GM10248 (cell line): ENCODE measurements at regions of chr14 and their contacts with region 1.

Region 1: GRCh38 chr14:20343092-20343861 is at the start of gene PARP2:
- DNase-seq: peak; percentile 93
- CTCF ChIP-seq: no peak

Region 2: DNA sequence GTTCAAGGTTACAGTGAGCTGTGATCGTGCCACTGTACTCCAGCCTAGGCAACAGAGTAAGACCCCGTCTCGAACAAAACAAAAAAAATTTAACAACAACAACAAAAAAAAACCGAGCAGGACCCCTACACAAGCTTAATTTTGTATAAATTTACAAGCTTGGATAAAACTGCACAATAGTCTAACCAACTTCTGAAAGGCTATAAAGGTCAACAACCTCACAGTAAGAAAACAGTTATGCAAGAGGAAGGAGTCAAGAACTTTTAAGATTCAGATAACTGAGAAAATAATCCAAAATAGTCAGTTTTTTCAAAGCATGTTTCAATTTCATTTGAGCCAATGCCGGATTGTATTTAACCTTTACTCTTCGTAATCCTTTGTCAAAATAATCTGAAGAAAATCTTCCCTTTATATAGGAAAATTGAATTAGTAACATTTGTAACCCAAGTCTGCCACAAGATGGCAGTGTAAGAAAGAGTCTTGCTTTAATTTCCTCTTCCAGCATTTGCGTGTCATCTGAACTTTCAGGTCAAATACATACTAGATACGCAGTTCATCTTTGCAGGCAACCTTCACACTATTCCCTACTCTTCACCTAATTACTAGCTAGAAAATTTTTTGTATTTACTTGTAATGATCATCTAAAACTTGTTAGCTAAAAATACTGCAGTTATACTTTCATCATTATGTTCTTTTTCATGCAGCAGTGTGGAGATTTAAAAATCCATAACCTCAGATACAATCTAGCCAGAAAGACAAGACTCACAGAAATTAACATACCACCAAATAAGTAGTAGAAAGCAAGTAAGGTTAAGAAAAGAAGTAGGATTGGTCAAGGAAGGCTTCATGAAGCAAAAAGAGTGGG is 16.0 kb before region 1 on chr14:
- CTCF ChIA-PET with region 1: interaction called, 45 read pairs
- POLR2A ChIA-PET with region 1: interaction called, 21 read pairs
- DNase-seq: peak; percentile 60
- CTCF ChIP-seq: peak; percentile 58

Region 3: GRCh38 chr14:20356422-20356821 is 13.1 kb after region 1 on chr14:
- CTCF ChIA-PET with region 1: interaction called, 20 read pairs
- POLR2A ChIA-PET with region 1: interaction called, 8 read pairs
- DNase-seq: no peak
- CTCF ChIP-seq: no peak

Region 4: DNA sequence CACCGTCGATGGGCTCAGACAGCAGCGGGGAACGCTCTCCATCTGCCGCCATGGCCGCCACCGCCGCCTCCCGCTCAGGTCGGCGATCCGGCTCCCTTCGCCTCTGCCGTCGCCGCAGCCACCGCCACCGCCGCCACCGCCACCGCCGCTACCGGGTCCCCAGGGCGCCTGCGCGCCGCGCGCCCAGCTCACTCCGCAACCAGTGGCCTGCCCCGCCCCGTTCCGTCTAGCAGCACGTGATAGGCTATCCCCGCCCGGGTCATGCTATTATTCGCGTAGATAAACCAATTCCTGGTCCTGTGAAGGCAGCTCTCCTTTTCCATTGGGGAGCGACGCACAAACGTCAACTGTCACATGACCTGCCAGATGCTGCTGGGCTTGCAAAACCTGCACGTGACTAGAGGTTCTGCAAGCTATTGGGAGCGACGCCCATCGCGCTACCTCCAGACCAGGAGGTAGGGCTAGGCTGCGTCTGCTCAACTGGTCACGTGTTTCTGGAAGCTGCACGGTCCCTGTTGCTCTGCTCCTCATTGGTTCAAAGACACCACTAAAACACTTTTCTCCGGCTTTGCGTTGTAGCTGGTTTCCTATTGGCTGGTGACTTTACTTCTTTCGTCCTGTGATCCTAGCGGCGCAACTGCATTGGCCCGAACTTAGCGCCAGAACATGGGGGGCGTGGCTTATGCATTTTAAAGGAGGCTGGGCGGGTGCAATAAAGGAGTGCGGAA is 118.2 kb after region 1 on chr14 and contains the start of gene PIP4P1:
- CTCF ChIA-PET with region 1: interaction called, 3 read pairs
- POLR2A ChIA-PET with region 1: interaction called, 26 read pairs
- DNase-seq: peak; percentile 92
- CTCF ChIP-seq: no peak

Region 5: GRCh38 chr14:21486640-21487087 is 1143.4 kb after region 1 on chr14:
- CTCF ChIA-PET with region 1: no interaction called
- POLR2A ChIA-PET with region 1: interaction called, 10 read pairs
- DNase-seq: no peak
- CTCF ChIP-seq: no peak